Activated CD4-positive, alpha-beta T cell treated with anti-CD3 and anti-CD28 coated beads for 36 hours (primary cell): ENCODE measurements at regions of chr20 and their contacts with region 1.

Region 1: DNA sequence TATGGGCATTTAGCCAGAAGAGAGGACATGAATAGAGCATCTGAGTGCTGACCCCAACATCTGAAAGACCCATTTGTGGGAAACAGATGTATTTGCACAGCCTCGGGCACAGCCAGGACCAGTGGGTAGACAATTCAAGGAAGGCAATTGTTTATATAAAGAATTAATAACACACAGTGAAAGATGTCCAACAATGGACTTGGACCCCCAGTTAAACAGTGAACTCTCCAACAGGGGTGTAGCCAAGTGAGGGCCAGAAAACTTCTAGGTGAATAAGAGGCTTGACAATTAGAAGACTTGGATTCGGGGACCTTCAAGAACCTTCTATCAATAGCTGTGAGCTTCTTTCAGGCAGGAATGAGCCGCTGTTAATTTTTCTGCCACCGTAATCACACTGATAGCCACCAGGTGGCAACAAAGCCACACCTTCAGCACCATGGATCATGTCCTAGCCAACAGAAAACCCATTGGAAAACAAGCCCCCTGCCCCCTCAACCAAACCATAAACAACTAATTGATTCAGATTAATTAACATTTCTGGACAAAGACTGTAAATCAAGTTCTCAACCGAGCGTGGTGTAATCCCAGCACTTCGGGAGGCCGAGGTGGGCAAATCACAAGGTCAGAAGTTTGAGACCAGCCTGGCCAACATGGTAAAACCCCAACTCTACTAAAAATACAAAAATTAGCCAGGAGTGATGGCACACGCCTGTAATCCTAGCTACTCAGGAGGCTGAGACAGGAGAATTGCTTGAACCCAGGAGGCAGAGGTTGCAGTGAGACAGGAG is 8.8 kb upstream of the SRSF6 start:
- DNase-seq: peak; percentile 66
- ATAC-seq: peak; percentile 69
- H3K4me3 Mint-ChIP-seq: no peak overlapping the region
- H3K27ac Mint-ChIP-seq: no peak overlapping the region
- H3K4me1 Mint-ChIP-seq: no peaks in the 10 kb centered on the region
- H3K27me3 Mint-ChIP-seq: peaks cover 23% of the 10 kb centered on the region

Region 2: DNA sequence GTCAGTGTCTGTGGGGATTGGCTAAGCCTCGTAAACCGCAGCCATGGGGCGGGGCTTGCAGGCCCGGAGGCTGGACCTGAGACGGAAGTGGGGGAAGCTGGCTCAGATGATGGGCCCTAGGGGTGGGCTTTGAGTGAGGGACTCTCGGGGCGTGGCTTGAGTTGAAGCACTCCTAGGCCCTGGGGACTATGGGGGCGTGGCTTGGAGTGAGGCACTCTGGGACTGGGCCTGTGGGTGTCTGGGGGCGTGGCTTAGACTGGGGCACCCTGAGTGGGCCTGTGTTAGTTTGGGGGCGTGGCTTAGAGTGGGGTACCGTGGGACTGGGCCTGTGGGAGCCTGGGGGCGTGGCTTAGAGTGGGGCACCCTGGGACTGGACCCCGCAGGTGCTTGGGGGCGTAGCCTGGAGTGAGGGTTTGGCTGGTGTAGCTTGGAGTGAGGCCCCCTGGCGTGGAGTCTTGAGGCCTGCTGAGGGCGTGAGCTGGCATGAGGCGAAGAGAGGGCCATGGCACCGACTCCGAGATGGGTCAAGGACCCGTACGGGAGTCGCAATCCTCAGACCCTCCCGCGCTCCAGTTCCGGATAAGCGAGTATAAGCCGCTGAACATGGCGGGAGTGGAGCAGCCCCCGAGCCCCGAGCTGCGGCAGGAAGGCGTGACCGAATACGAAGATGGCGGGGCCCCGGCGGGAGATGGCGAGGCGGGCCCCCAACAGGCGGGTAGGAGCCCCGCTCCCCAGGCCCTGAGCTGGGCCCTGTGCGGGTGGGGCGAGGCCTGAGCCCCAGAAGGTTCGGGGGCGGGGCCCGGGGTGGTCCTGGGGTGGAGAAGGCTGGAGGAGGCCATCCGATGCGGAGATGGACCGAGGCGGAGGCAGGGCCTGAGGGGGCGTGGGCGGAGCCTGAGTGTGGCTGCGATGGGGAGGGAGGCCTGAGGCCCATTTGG is 65.4 kb after region 1 on chr20:
- CTCF ChIA-PET with region 1: interaction called, 5 read pairs
- POLR2A ChIA-PET with region 1: no interaction called
- intact Hi-C with region 1: loop called in 1 of 2 experiments (anchors 2 kb)
- DNase-seq: peak; percentile 96
- ATAC-seq: peak; percentile 93
- H3K4me3 Mint-ChIP-seq: peak overlapping the region; percentile 90
- H3K27ac Mint-ChIP-seq: peak overlapping the region; percentile 86
- H3K4me1 Mint-ChIP-seq: peaks cover 7% of the 10 kb centered on the region
- H3K27me3 Mint-ChIP-seq: peaks cover 3% of the 10 kb centered on the region

Region 3: GRCh38 chr20:43691928-43692524 is 243.1 kb after region 1 on chr20:
- CTCF ChIA-PET with region 1: interaction called, 5 read pairs
- POLR2A ChIA-PET with region 1: no interaction called
- intact Hi-C with region 1: loop called (anchors 1 to 2 kb)
- DNase-seq: peak; percentile 81
- ATAC-seq: peak; percentile 85
- H3K4me3 Mint-ChIP-seq: no peak overlapping the region
- H3K27ac Mint-ChIP-seq: no peak overlapping the region
- H3K4me1 Mint-ChIP-seq: peaks cover 9% of the 10 kb centered on the region
- H3K27me3 Mint-ChIP-seq: no peaks in the 10 kb centered on the region

Region 4: GRCh38 chr20:44092551-44093248 is 643.8 kb after region 1 on chr20:
- CTCF ChIA-PET with region 1: interaction called, 3 read pairs
- POLR2A ChIA-PET with region 1: no interaction called
- intact Hi-C with region 1: loop called (anchors 1 to 5 kb)
- DNase-seq: peak; percentile 59
- ATAC-seq: no peak
- H3K4me3 Mint-ChIP-seq: no peak overlapping the region
- H3K27ac Mint-ChIP-seq: no peak overlapping the region
- H3K4me1 Mint-ChIP-seq: no peaks in the 10 kb centered on the region
- H3K27me3 Mint-ChIP-seq: peaks cover 4% of the 10 kb centered on the region